ENCODE measurements at regions of chr11 and their contacts with region 1.

Region 1: DNA sequence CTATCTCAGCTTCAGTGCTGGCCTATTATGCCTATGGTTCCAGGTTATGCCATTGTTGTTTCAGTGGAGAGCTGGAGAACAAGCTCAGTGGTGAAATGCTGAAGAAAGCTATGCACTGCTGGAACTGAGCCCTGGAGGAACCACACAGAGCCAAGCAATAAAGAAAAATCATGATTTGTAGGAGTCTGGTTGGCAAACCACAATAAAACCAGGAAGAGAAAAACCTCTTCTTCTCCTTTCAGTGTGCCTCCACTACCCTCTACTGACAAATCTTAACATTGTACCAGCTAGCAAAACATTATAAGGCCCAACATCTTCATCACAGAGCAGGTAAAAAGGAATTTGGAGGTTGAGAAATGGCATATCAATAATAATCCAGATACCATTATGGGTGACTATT is 5.3 kb downstream of the OR51F2 start:
- DNase-seq: no peak
- H3K4me3 ChIP-seq: no peak overlapping the region
- H3K27ac ChIP-seq: no peak overlapping the region
- H3K4me1 ChIP-seq: peaks cover 0 to 7% (median 5%) of the 10 kb centered on the region in 4 donors
- H3K27me3 ChIP-seq: no peaks in the 10 kb centered on the region
- CTCF ChIP-seq: peak; percentile 46 to 60 (median 58)
- EP300 ChIP-seq: no peak
- POLR2A ChIP-seq: no peak

Region 2: GRCh38 chr11:4418403-4418802 is 408.0 kb before region 1 on chr11:
- intact Hi-C with region 1: no loop called
- DNase-seq: no peak
- H3K4me3 ChIP-seq: no peak overlapping the region
- H3K27ac ChIP-seq: no peak overlapping the region
- H3K4me1 ChIP-seq: no peaks in the 10 kb centered on the region
- H3K27me3 ChIP-seq: no peaks in the 10 kb centered on the region
- CTCF ChIP-seq: no peak
- EP300 ChIP-seq: no peak
- POLR2A ChIP-seq: no peak

Region 3: DNA sequence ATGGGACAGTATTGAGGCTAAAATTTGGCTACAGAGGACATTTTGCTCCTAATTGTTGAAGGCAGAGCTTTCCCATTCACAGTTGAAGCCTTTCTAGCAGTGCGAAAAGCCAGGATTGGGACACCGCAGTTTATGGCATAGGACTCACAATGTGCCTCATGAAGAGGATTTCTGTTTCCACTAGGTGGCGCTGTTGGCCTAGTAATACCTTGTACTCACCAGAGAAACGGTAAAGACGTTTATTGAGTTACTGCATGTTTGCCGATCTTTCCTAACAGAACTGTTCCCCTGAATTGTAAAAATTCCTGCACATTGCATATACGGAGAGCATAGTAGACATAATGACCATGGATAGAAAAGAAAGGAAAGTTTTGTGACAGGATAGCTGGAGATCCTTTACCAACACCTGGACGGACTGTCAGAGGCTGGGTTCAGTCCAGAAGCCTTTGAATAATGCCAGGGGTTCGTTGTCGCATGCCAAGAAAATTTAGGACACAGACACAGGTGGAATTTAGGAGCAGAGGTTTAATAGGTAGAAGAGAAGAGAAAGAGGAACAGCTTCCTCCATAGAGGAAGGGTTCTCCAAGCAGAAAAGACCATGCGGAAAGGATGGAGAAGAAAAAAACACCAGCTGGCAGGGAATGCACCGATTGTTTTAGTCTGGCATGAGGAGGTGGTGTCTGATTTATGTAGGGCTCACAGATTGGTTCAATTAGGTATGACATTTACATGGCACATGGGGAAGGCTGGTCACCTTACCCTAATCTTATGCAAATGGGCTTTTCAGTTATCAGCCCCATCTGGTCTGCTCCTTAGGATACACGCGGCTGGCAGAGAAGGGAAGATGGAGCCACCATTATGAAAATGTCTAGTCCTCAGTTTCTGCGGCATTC is 200.0 kb before region 1 on chr11:
- intact Hi-C with region 1: loop called (anchors 2 kb)
- DNase-seq: peak; percentile 74
- H3K4me3 ChIP-seq: no peak overlapping the region
- H3K27ac ChIP-seq: no peak overlapping the region
- H3K4me1 ChIP-seq: no peaks in the 10 kb centered on the region
- H3K27me3 ChIP-seq: no peaks in the 10 kb centered on the region
- CTCF ChIP-seq: peak; percentile 15 to 75 (median 60)
- EP300 ChIP-seq: no peak
- POLR2A ChIP-seq: no peak

Region 4: GRCh38 chr11:4636962-4637661 is 189.3 kb before region 1 on chr11 and contains the start of gene OR51D1:
- intact Hi-C with region 1: loop called (anchors 1 kb)
- DNase-seq: peak; percentile 80
- H3K4me3 ChIP-seq: peak within 1 kb of the TSS in 2 of 4 donors; percentile 35
- H3K27ac ChIP-seq: no peak within 1 kb of the TSS
- H3K4me1 ChIP-seq: peaks cover 0 to 12% (median 3%) of the 10 kb centered on the region in 4 donors
- H3K27me3 ChIP-seq: no peaks in the 10 kb centered on the region
- CTCF ChIP-seq: peak; percentile 62 to 90 (median 85)
- EP300 ChIP-seq: no peak
- POLR2A ChIP-seq: no peak
- total RNA-seq, gene OR51D1: not detected

Region 5: GRCh38 chr11:4704054-4704789 is 122.2 kb before region 1 on chr11 and contains the start of gene MMP26:
- intact Hi-C with region 1: loop called (anchors 10 kb)
- DNase-seq: no peak
- H3K4me3 ChIP-seq: no peak within 1 kb of the TSS
- H3K27ac ChIP-seq: peak within 1 kb of the TSS in 3 of 4 donors; percentile 6 to 44 (median 11)
- H3K4me1 ChIP-seq: peaks cover 0 to 32% (median 12%) of the 10 kb centered on the region in 4 donors
- H3K27me3 ChIP-seq: no peaks in the 10 kb centered on the region
- CTCF ChIP-seq: no peak
- EP300 ChIP-seq: no peak
- POLR2A ChIP-seq: no peak
- total RNA-seq, gene MMP26: not detected